Activated CD4-positive, alpha-beta T cell treated with anti-CD3 and anti-CD28 coated beads, Interleukin-2, amount 10 ng/mL, durations not matched to agents 24 days and 14 days (primary cell): ENCODE measurements at regions of chr2 and their contacts with region 1.

Region 1: DNA sequence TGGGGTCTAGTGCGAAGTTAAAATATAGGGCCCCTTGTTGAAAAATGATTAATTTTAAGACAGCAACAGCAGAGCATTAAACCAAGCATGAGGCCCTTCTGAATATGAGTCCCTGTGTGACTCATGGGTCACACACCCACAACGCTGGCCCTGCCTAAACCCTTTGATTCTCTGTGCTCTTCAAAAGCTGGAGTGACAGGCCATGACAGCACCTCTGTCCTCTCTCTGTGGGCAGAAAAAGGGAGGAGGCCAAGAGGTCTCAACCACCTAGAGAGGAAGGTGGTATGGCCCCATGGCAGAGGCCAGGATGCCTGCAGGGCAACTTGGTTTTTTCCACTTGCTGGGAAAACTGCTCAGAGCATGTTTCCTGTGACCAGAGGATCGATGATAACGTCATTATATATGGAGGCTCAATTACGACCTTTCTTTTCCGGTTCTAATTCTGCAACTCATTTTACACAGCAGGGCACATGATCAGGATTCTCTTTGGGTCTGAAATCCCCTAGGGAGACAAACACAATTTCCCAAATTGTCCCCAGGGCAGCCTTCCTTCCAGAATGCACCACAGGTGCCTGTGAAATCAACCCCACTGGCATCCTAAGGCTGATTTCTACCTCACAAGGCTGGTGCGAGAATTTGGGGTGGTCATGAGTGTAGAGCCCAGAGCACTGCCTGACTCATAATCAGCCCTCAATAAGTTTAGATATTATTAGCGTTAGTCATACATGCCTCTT is 102.0 kb upstream of the PPP1CB start:
- DNase-seq: peak; percentile 65
- H3K4me3 Mint-ChIP-seq: peak overlapping the region; percentile 33
- H3K27ac Mint-ChIP-seq: peak overlapping the region; percentile 80
- H3K4me1 Mint-ChIP-seq: peaks cover 30% of the 10 kb centered on the region
- H3K27me3 Mint-ChIP-seq: no peaks in the 10 kb centered on the region

Region 2: GRCh38 chr2:28610583-28611201 is 39.0 kb before region 1 on chr2:
- intact Hi-C with region 1: loop called (anchors 5 kb)
- DNase-seq: peak; percentile 75
- H3K4me3 Mint-ChIP-seq: peak overlapping the region; percentile 28
- H3K27ac Mint-ChIP-seq: peak overlapping the region; percentile 65
- H3K4me1 Mint-ChIP-seq: peaks cover 29% of the 10 kb centered on the region
- H3K27me3 Mint-ChIP-seq: no peaks in the 10 kb centered on the region

Region 3: DNA sequence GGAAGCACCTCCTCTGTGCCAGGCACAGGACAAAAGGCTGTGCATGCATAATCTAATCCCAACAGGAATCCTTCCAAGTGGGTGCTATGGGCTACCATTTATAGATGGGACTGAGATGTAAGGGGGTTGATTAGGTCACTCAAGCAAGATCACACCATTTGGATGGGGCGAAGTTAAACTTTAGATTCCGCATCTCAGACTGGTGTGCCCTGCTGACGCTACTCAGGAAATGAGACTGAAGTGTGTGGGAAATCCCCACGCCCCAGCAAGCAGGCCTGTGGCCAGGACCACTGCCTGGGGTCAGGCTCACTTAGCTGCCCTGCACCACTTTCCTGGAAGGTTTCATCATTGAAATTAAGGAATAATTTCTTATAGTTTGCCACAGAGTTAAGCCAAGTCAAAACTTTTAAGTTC is 31.5 kb after region 1 on chr2:
- intact Hi-C with region 1: loop called (anchors 1 kb)
- DNase-seq: peak; percentile 90
- H3K4me3 Mint-ChIP-seq: peak overlapping the region; percentile 73
- H3K27ac Mint-ChIP-seq: peak overlapping the region; percentile 97
- H3K4me1 Mint-ChIP-seq: peaks cover 60% of the 10 kb centered on the region
- H3K27me3 Mint-ChIP-seq: no peaks in the 10 kb centered on the region